ENCODE measurements at regions of chr9 and their contacts with region 1.

Region 1: GRCh38 chr9:127916665-127917613 is at the start of gene ST6GALNAC4:
- DNase-seq: peak; percentile 97
- H3K4me3 ChIP-seq: peak within 1 kb of the TSS; percentile 59
- H3K27ac ChIP-seq: peak within 1 kb of the TSS; percentile 57
- H3K4me1 ChIP-seq: peaks cover 35% of the 10 kb centered on the region
- H3K27me3 ChIP-seq: no peaks in the 10 kb centered on the region
- CTCF ChIP-seq: no peak
- total RNA-seq, gene ST6GALNAC4: 25.4 to 66.5 TPM

Region 2: GRCh38 chr9:127586537-127586936 is 330.4 kb before region 1 on chr9:
- intact Hi-C with region 1: loop called (anchors 5 kb)
- DNase-seq: peak; percentile 89
- H3K4me3 ChIP-seq: no peak overlapping the region
- H3K27ac ChIP-seq: no peak overlapping the region
- H3K4me1 ChIP-seq: peaks cover 3% of the 10 kb centered on the region
- H3K27me3 ChIP-seq: no peaks in the 10 kb centered on the region
- CTCF ChIP-seq: peak; percentile 85

Region 3: GRCh38 chr9:127785023-127785932 is 131.7 kb before region 1 on chr9:
- intact Hi-C with region 1: loop called (anchors 5 kb)
- DNase-seq: peak; percentile 89
- H3K4me3 ChIP-seq: peak overlapping the region; percentile 98
- H3K27ac ChIP-seq: peak overlapping the region; percentile 96
- H3K4me1 ChIP-seq: no peaks in the 10 kb centered on the region
- H3K27me3 ChIP-seq: no peaks in the 10 kb centered on the region
- CTCF ChIP-seq: peak; percentile 85

Region 4: DNA sequence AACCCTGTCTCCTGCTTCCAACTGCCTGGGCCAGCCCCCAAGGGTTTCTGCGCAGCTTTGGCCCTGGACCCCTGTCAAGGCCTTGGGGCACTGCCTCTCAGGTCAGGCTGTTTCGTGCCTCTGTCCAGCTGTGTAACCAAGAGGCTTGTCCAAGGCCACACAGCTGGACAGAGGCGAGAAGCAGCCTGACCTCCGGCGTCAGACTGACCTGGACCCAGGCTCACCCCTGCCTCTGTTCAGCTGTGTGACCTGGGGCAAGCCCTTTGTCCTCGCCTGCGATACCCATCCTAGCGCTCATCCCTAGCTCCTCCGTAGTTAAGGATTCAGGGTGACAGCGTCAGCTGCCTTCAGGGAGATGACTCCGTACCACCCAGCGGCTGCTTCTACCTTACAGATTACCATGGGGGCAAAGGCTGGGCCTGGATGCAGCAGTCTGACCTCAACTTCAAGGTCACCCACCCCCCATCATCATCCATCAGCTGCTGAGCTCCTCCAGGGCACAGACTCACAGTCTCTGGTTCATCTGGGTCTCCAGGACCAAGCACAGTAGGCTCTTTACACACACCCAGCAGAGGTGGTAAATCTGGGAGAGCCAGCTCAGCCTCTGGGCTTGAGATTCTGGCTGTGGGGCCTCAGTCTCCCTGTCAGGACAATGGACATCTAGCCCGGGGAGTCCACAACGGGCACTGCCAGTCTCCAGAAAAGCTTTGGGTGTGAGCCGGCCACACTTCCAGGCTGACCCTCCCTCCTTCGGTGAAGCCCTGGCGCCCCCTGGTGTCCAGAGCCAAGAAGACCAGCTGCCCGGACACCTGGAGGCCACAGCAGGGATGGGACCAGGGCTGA is 47.4 kb before region 1 on chr9:
- intact Hi-C with region 1: loop called (anchors 2 kb)
- DNase-seq: peak; percentile 94
- H3K4me3 ChIP-seq: no peak overlapping the region
- H3K27ac ChIP-seq: no peak overlapping the region
- H3K4me1 ChIP-seq: peaks cover 7% of the 10 kb centered on the region
- H3K27me3 ChIP-seq: no peaks in the 10 kb centered on the region
- CTCF ChIP-seq: peak; percentile 81